Naive thymus-derived CD4-positive, alpha-beta T cell (primary cell): ENCODE measurements at regions of chr7 and their contacts with region 1.

Region 1: DNA sequence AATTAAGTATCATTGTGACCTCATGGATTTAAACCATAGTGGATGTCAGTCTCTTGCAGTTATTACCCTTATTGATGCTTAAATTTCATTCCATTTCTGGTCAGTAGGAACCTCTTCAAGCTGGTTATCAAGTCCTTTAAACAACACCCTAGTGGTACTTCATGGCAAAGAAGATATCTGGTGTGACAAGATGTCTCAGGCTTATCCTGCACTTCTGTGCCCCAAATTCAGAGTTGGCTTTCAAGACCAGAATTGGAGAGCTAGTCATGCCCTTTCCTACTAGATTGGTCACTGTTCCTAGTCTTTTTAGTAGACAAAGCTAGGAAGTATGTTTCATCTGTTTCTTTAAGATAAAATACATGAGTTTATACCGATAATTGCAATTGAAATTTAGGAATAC is 54.9 kb downstream of the KMT2E start:
- DNase-seq: no peak
- ATAC-seq: no peak
- H3K4me3 ChIP-seq: no peak overlapping the region
- H3K4me3 Mint-ChIP-seq: no peak overlapping the region
- H3K27ac ChIP-seq: no peak overlapping the region
- H3K27ac Mint-ChIP-seq: peak overlapping the region in 2 of 9 donors; percentile 41 to 55
- H3K4me1 ChIP-seq: peaks cover 0 to 4% of the 10 kb centered on the region in 2 donors
- H3K4me1 Mint-ChIP-seq: peaks cover 6 to 33% (median 14%) of the 10 kb centered on the region in 7 donors
- H3K27me3 ChIP-seq: no peaks in the 10 kb centered on the region
- H3K27me3 Mint-ChIP-seq: no peaks in the 10 kb centered on the region

Region 2: GRCh38 chr7:105079348-105079747 is 10.5 kb after region 1 on chr7:
- CTCF ChIA-PET with region 1: no interaction called
- POLR2A ChIA-PET with region 1: interaction called, 3 read pairs
- intact Hi-C with region 1: loop called in 1 of 2 experiments (anchors 1 kb)
- DNase-seq: no peak
- ATAC-seq: peak; percentile 31
- H3K4me3 ChIP-seq: no peak overlapping the region
- H3K4me3 Mint-ChIP-seq: no peak overlapping the region
- H3K27ac ChIP-seq: no peak overlapping the region
- H3K27ac Mint-ChIP-seq: peak overlapping the region in 2 of 9 donors; percentile 25 to 40
- H3K4me1 ChIP-seq: no peaks in the 10 kb centered on the region
- H3K4me1 Mint-ChIP-seq: peaks cover 0 to 36% (median 10%) of the 10 kb centered on the region in 7 donors
- H3K27me3 ChIP-seq: no peaks in the 10 kb centered on the region
- H3K27me3 Mint-ChIP-seq: no peaks in the 10 kb centered on the region

Region 3: GRCh38 chr7:105084581-105084980 is 15.7 kb after region 1 on chr7:
- CTCF ChIA-PET with region 1: interaction called, 3 read pairs
- POLR2A ChIA-PET with region 1: interaction called, 3 read pairs
- intact Hi-C with region 1: loop called in 1 of 2 experiments (anchors 2 kb)
- DNase-seq: no peak
- ATAC-seq: no peak
- H3K4me3 ChIP-seq: no peak overlapping the region
- H3K4me3 Mint-ChIP-seq: no peak overlapping the region
- H3K27ac ChIP-seq: no peak overlapping the region
- H3K27ac Mint-ChIP-seq: peak overlapping the region in 3 of 9 donors; percentile 42 to 52 (median 46)
- H3K4me1 ChIP-seq: no peaks in the 10 kb centered on the region
- H3K4me1 Mint-ChIP-seq: peaks cover 5 to 29% (median 20%) of the 10 kb centered on the region in 7 donors
- H3K27me3 ChIP-seq: no peaks in the 10 kb centered on the region
- H3K27me3 Mint-ChIP-seq: no peaks in the 10 kb centered on the region

Region 4: DNA sequence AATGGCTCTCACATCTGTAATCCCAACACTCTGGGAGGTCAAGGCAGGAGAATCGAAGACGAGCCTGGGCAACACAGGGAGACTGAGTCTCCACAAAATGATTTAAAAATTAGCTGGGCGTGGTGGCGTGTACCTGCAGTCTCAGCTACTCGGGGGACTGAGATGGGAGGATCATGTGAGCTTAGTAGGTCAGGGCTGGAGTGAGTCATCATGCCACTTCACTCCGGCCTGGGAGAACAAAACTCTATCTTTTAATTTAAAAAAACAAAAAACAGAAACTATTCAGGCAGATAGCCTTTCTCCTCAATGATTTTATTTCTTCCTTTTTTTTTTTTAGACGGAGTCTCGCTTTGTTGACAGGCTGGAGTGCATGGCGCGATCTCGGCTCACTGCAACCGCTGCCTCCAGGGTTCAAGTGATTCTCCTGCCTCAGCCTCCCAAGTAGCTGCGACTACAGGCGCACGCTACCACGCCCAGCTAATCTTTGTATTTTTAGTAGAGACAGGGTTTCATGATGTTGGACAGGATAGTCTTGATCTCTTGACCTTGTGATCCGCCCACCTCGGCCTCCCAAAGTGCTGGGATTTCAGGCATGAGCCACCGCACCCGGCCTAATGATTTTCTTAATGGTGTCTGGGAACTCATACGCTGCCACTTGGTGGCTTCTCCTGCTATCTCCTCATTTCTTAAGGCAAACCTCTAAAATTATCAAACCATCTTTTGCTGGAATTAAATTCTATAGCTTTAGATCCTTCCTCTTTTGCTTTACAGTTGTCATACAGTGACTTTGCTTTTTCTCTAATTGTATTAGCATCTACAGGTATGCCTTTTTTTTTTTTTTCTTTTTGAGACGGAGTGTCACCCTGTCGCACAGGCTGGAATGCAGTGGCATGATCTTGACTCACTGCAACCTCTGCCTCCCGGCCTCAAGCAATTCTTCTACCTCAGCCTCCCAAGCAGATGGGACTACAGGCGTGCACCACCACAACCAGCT is 297.0 kb after region 1 on chr7:
- CTCF ChIA-PET with region 1: no interaction called
- POLR2A ChIA-PET with region 1: no interaction called
- intact Hi-C with region 1: no loop called
- DNase-seq: no peak
- ATAC-seq: no peak
- H3K4me3 ChIP-seq: no peak overlapping the region
- H3K4me3 Mint-ChIP-seq: peak overlapping the region in 1 of 10 donors; percentile 26
- H3K27ac ChIP-seq: no peak overlapping the region
- H3K27ac Mint-ChIP-seq: peak overlapping the region in 3 of 9 donors; percentile 34 to 54 (median 46)
- H3K4me1 ChIP-seq: peaks cover 10 to 11% of the 10 kb centered on the region in 2 donors
- H3K4me1 Mint-ChIP-seq: peaks cover 14 to 65% (median 49%) of the 10 kb centered on the region in 7 donors
- H3K27me3 ChIP-seq: no peaks in the 10 kb centered on the region
- H3K27me3 Mint-ChIP-seq: no peaks in the 10 kb centered on the region